GM10248 (cell line): ENCODE measurements at regions of chr17 and their contacts with region 1.

Region 1: GRCh38 chr17:8581002-8581658 is 49.4 kb downstream of the MYH10 start:
- DNase-seq: peak; percentile 39
- CTCF ChIP-seq: no peak

Region 2: DNA sequence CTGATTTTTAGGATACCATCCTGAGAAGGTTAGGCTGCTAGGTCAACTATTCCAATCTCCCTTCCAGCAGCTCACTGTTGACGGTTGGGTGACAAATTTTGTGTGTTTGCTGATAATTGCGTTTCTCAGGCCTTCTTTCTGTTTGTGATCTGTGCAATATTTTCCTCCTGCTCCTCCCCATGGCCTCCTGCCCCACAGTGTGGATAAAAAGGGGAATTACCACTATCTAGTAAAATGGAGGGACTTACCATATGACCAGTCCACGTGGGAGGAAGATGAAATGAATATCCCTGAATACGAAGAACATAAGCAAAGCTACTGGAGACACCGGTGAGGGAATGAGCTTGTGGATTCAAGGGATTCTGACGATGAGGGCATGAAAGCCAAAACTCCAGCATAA is 683.4 kb before region 1 on chr17:
- CTCF ChIA-PET with region 1: no interaction called
- POLR2A ChIA-PET with region 1: no interaction called
- DNase-seq: no peak
- CTCF ChIP-seq: no peak

Region 3: DNA sequence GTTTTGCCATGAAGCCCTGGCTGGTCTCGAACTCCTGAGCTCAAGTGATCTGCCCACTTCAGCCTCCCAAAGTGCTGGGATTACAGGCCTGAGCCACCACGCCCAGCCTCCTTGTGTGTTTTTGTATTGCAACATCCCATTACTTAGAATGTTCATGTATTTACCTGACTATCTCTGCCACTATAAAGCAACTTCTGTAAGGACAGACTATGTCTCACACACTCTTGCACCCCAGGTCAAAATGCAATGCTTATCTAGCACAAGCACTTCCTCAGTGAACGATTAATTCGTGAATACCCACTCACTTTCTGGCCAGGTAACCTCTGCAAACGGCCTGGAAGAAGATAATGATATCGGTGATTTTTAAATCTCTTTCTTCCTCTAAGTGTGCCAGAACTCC is 62.8 kb before region 1 on chr17:
- CTCF ChIA-PET with region 1: no interaction called
- POLR2A ChIA-PET with region 1: no interaction called
- DNase-seq: no peak
- CTCF ChIP-seq: no peak

Region 4: GRCh38 chr17:8563981-8564602 is 17.0 kb before region 1 on chr17:
- CTCF ChIA-PET with region 1: interaction called, 15 read pairs
- POLR2A ChIA-PET with region 1: no interaction called
- DNase-seq: no peak
- CTCF ChIP-seq: no peak